ENCODE measurements at regions of chr11 and their contacts with region 1.

Region 1: GRCh38 chr11:94767761-94768601 is at the start of gene AMOTL1:
- DNase-seq: peak; percentile 92
- H3K4me3 ChIP-seq: peak within 1 kb of the TSS; percentile 95
- H3K27ac ChIP-seq: peak within 1 kb of the TSS; percentile 90
- H3K4me1 ChIP-seq: peaks cover 60% of the 10 kb centered on the region
- H3K27me3 ChIP-seq: no peaks in the 10 kb centered on the region
- CTCF ChIP-seq: no peak; the same call in 1 of the 2 replicates
- total RNA-seq, gene AMOTL1: 48.0 and 60.5 TPM in 2 replicates

Region 2: DNA sequence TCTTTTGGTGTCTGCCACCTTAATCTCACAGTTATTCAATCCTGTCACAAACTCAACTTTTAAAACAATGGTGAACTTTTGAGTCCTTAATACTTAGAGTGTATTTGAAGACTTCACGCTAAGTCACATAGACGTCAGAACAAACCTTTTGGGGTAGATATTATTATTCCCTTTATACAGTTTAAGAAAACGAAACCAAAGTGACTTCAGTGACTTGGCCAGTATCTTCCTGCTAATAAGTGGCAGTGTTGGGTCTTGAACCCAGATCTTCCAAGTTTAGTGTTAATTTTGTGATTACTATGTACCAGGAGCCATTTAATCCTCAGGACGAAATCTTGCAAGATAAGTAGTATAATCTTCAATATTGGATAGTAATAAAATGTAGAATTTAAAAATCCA is 1105.8 kb before region 1 on chr11:
- CTCF ChIA-PET with region 1: no interaction called
- POLR2A ChIA-PET with region 1: no interaction called
- intact Hi-C with region 1: no loop called
- DNase-seq: no peak
- H3K4me3 ChIP-seq: peak overlapping the region; percentile 87
- H3K27ac ChIP-seq: peak overlapping the region; percentile 66
- H3K4me1 ChIP-seq: peaks cover 13% of the 10 kb centered on the region
- H3K27me3 ChIP-seq: no peaks in the 10 kb centered on the region
- CTCF ChIP-seq: no peak

Region 3: DNA sequence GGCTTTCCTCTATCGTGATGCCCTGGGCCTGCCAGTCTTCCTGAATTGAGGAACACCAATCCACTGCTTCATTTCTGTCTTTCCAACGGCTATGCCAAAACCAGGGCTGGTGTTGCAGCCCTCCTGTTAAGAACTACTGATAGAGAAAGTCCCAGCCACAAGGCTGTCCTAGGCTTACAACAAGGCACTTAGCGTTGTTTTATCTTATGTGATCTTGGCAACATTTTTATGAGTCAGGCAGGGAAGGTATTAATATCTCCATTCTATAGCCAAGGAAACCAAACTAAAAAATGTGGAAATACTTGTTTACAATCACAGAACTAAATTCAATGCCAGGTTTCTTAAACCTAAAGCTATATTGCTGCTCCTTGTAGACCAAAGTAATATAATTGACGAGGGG is 89.7 kb before region 1 on chr11:
- CTCF ChIA-PET with region 1: interaction called, 5 read pairs
- POLR2A ChIA-PET with region 1: interaction called, 6 read pairs
- intact Hi-C with region 1: loop called (anchors 5 kb)
- DNase-seq: peak; percentile 35 to 98
- H3K4me3 ChIP-seq: peak overlapping the region; percentile 36
- H3K27ac ChIP-seq: peak overlapping the region; percentile 76
- H3K4me1 ChIP-seq: peaks cover 48% of the 10 kb centered on the region
- H3K27me3 ChIP-seq: no peaks in the 10 kb centered on the region
- CTCF ChIP-seq: no peak

Region 4: GRCh38 chr11:94747146-94748080 is 20.6 kb before region 1 on chr11:
- CTCF ChIA-PET with region 1: interaction called, 3 read pairs
- POLR2A ChIA-PET with region 1: interaction called, 5 read pairs
- intact Hi-C with region 1: loop called (anchors 1 kb)
- DNase-seq: peak; percentile 75 to 100
- H3K4me3 ChIP-seq: peak overlapping the region; percentile 22; the same call in 1 of the 2 replicates
- H3K27ac ChIP-seq: peak overlapping the region; percentile 99
- H3K4me1 ChIP-seq: peaks cover 96% of the 10 kb centered on the region
- H3K27me3 ChIP-seq: no peaks in the 10 kb centered on the region
- CTCF ChIP-seq: no peak

Region 5: DNA sequence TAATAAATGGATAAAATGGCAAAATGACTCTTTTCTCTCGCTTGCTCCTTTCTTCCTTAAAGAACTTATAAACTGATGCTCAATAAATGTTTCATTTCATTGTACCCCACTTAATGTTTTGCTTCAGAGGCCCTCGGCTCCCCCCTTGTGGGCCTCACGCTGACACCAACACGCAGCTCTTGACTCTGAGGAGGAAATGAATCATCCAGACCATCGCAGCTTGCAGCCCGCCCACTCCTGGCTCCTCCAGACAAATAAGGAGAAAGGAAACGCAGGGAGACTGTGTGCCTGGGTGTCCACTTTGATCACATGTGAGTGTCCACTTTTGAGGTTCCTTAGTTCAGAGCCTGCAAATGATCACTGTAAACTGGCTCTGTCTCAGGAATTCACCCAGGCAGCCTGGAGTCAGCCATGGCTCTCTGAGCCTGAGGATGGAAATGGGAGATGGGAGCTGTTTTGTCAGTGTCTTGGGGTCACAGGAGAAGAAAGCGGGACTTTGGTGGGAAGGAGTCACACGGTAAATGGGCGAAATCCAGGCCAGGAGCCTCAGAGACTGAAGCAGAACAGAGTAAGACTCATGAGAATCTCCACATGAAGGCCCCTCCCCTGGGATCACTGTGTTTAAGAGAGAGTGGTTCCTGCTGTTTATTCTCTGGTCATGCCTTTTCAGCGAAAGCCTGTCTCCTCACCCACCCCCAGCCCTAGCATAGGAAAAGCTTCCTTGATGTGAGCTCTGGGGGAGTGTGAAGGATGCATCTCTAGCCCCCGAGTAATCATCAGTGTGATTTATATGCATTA is 108.9 kb after region 1 on chr11:
- CTCF ChIA-PET with region 1: no interaction called
- POLR2A ChIA-PET with region 1: no interaction called
- intact Hi-C with region 1: loop called (anchors 5 kb)
- DNase-seq: peak in 1 of 2 experiments; percentile 40
- H3K4me3 ChIP-seq: no peak overlapping the region
- H3K27ac ChIP-seq: no peak overlapping the region
- H3K4me1 ChIP-seq: peaks cover 27% of the 10 kb centered on the region
- H3K27me3 ChIP-seq: no peaks in the 10 kb centered on the region
- CTCF ChIP-seq: no peak

Region 6: DNA sequence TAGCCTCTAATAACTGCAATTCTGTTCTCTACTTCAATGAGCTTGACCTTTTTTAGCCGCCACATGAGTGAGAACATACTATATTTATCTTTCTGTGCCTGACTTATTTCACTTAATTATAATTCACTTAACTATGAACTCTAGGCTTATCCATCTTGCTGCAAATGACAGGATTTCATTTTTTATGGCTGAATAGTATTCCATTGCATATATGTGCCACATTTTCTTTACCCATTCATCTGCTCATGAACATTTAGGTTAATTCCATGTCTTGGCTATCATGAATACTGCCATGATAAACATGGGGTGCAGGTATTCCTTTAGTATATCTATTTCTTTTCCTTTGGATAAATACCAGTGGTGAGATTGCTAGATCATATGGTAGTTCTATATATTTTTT is 120.2 kb after region 1 on chr11:
- CTCF ChIA-PET with region 1: no interaction called
- POLR2A ChIA-PET with region 1: no interaction called
- intact Hi-C with region 1: no loop called
- DNase-seq: no peak
- H3K4me3 ChIP-seq: no peak overlapping the region
- H3K27ac ChIP-seq: no peak overlapping the region
- H3K4me1 ChIP-seq: peaks cover 19% of the 10 kb centered on the region; the same call in 1 of the 2 replicates
- H3K27me3 ChIP-seq: no peaks in the 10 kb centered on the region
- CTCF ChIP-seq: no peak

Region 7: DNA sequence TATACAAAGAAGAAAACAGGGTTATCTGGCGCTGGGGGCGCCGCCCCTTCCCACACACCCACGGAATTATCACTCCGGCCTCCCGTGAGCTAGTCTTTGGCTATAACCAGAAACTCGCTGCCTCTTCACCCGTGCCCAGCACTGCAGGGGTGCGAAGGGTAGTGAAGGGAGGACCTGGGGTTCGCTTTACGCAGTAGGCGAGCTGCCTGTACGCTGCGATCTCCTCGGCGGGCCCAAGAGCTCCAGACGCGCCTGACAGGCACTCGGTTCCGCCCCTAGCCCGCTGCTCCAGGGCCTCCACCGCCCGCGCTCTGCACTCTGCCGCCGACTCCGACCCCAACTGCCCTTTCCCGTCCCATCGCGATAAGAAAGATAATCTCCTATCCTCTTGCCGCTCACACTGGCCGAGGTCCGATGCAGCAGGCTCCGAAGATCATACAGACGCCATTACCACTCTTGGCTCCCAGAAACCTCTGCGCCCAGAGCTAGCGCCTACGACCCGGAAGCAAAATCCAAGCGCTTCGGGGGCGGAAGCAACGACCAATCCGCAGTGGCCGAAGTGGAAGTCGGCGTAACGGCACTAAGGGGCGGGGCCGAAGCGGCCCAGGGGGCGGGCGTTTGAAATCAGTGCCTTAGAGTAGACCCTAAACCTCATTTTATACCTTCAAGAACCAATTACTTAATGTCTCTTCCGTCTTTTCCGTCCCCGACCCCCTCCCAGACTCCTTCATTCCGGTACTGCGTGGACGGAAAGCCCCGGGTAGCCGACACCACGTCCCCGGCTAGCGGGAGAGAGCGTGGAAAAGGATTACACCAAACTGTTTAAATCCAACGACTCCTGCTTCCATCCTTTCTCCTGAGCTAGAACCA is 205.4 kb after region 1 on chr11 and contains the starts of genes CWC15 and KDM4D:
- CTCF ChIA-PET with region 1: no interaction called
- POLR2A ChIA-PET with region 1: no interaction called
- intact Hi-C with region 1: loop called (anchors 10 kb)
- DNase-seq: peak; percentile 88 to 91
- H3K4me3 ChIP-seq: peak within 1 kb of the TSS; percentile 76
- H3K27ac ChIP-seq: peak within 1 kb of the TSS; percentile 44
- H3K4me1 ChIP-seq: peaks cover 11% of the 10 kb centered on the region
- H3K27me3 ChIP-seq: no peaks in the 10 kb centered on the region
- CTCF ChIP-seq: no peak
- total RNA-seq, gene CWC15: 50.9 and 54.2 TPM in 2 replicates
- total RNA-seq, gene KDM4D: 0.85 and 1.1 TPM in 2 replicates

Measured in PC-9 (cell line).